GM12878 (cell line): ENCODE measurements at regions of chr7 and their contacts with region 1.

Region 1: GRCh38 chr7:11447106-11447505 is 384.9 kb downstream of the THSD7A start:
- DNase-seq: no peak
- ATAC-seq: no peak
- H3K4me3 ChIP-seq: no peak overlapping the region
- H3K27ac ChIP-seq: no peak overlapping the region
- H3K4me1 ChIP-seq: no peaks in the 10 kb centered on the region
- H3K27me3 ChIP-seq: no peaks in the 10 kb centered on the region
- CTCF ChIP-seq: no peak
- EP300 ChIP-seq: no peak
- POLR2A ChIP-seq: no peak
- RAD21 ChIP-seq: no peak

Region 2: GRCh38 chr7:11249799-11250198 is 197.3 kb before region 1 on chr7:
- CTCF ChIA-PET with region 1: no interaction called
- POLR2A ChIA-PET with region 1: no interaction called
- RAD21 ChIA-PET with region 1: no interaction called
- SMC1A ChIA-PET with region 1: no interaction called
- in situ Hi-C with region 1: no loop called
- intact Hi-C with region 1: no loop called
- DNase-seq: no peak
- ATAC-seq: no peak
- H3K4me3 ChIP-seq: no peak overlapping the region
- H3K27ac ChIP-seq: no peak overlapping the region
- H3K4me1 ChIP-seq: no peaks in the 10 kb centered on the region; the same call in 1 of the 2 replicates
- H3K27me3 ChIP-seq: no peaks in the 10 kb centered on the region
- CTCF ChIP-seq: no peak
- EP300 ChIP-seq: no peak
- POLR2A ChIP-seq: no peak
- RAD21 ChIP-seq: no peak

Region 3: GRCh38 chr7:11328309-11328708 is 118.8 kb before region 1 on chr7:
- CTCF ChIA-PET with region 1: no interaction called
- POLR2A ChIA-PET with region 1: no interaction called
- RAD21 ChIA-PET with region 1: no interaction called
- SMC1A ChIA-PET with region 1: no interaction called
- in situ Hi-C with region 1: no loop called
- intact Hi-C with region 1: no loop called
- DNase-seq: no peak
- ATAC-seq: no peak
- H3K4me3 ChIP-seq: no peak overlapping the region
- H3K27ac ChIP-seq: no peak overlapping the region
- H3K4me1 ChIP-seq: peaks cover 9% of the 10 kb centered on the region
- H3K27me3 ChIP-seq: no peaks in the 10 kb centered on the region
- CTCF ChIP-seq: no peak
- EP300 ChIP-seq: no peak
- POLR2A ChIP-seq: no peak
- RAD21 ChIP-seq: no peak

Region 4: GRCh38 chr7:11506417-11506816 is 59.3 kb after region 1 on chr7:
- CTCF ChIA-PET with region 1: no interaction called
- POLR2A ChIA-PET with region 1: no interaction called
- RAD21 ChIA-PET with region 1: no interaction called
- SMC1A ChIA-PET with region 1: no interaction called
- in situ Hi-C with region 1: no loop called
- intact Hi-C with region 1: loop called (anchors 10 kb)
- DNase-seq: no peak
- ATAC-seq: no peak
- H3K4me3 ChIP-seq: no peak overlapping the region
- H3K27ac ChIP-seq: no peak overlapping the region
- H3K4me1 ChIP-seq: no peaks in the 10 kb centered on the region
- H3K27me3 ChIP-seq: no peaks in the 10 kb centered on the region
- CTCF ChIP-seq: no peak
- EP300 ChIP-seq: no peak
- POLR2A ChIP-seq: no peak
- RAD21 ChIP-seq: no peak